HCT116 (cell line): ENCODE measurements at regions of chr13 and their contacts with region 1.

Region 1: DNA sequence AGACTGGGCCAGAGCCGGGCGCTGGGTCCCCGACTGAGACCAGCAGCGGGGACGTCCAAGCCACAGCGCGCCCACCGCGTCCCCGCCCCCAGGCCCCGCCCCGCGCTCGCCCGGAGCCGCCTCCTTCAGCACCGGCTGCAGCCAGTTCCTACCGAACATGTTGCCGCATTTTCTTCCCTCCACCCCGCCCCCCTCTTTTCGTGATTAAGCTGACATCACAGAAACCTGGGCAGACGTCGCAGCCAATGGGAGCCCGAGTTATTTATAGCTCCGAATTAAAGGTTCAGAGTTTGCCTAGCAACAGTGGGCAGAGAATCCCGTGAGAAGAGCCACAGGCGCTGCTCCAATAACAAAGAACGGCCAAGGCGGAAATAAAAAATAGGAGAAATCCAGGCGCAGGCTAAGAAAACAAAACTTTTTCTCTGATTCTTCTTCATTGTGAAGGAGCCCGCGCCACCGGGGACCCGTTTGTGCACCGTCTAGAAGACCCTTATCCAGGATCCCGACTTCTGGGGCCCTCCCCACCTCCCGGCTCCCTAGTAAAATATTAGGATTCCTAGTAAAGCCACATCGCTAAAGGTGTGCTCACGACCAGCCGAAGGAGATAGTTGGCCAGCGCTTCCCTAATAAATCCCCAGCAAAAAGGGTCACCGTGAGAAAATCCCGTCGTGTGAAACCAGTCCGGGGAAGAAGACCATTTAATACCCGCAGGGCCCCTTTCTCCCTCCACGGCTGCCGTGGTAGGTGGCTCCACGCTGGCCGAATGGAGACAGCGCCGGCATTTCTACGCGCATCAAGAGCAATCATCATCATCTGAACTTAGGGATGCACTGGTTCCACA is 61.7 kb downstream of the SERP2 start:
- DNase-seq: peak; percentile 92
- ATAC-seq: peak; percentile 59
- H3K4me3 ChIP-seq: peak overlapping the region; percentile 90 to 94
- H3K27ac ChIP-seq: peak overlapping the region; percentile 91
- H3K4me1 ChIP-seq: peaks cover 33 to 66% of the 10 kb centered on the region in 2 experiments
- H3K27me3 ChIP-seq: no peaks in the 10 kb centered on the region
- CTCF ChIP-seq: no peak
- POLR2A ChIP-seq: peak; percentile 15
- RAD21 ChIP-seq: no peak

Region 2: DNA sequence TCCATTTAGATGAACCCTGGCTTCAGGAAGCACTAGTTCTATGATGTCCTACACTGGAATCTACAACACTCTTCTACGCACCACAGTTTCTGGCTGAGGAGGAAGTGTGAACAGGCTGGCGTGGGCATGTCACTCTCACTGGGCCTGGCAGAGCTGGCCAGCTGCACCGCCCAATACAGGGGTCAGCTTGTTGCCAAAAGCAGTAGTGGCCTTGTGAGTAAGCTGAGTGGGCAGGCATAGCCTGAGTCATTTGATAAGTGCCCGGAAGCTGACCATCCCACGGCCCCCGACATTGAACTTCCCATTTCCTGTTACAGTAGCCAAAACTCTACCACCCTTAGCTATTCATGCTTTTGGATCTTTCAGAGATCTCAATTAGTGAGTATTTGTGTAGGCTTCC is 302.7 kb before region 1 on chr13:
- CTCF ChIA-PET with region 1: interaction called, 3 read pairs
- POLR2A ChIA-PET with region 1: interaction called, 17 read pairs
- RAD21 ChIA-PET with region 1: no interaction called
- intact Hi-C with region 1: no loop called
- DNase-seq: peak; percentile 38
- ATAC-seq: peak; percentile 60
- H3K4me3 ChIP-seq: no peak overlapping the region; a peak in 2 of 4 replicates
- H3K27ac ChIP-seq: no peak overlapping the region
- H3K4me1 ChIP-seq: peaks cover 5 to 29% of the 10 kb centered on the region in 2 experiments; a peak in 2 of 4 replicates
- H3K27me3 ChIP-seq: no peaks in the 10 kb centered on the region
- CTCF ChIP-seq: no peak
- POLR2A ChIP-seq: no peak
- RAD21 ChIP-seq: no peak

Region 3: DNA sequence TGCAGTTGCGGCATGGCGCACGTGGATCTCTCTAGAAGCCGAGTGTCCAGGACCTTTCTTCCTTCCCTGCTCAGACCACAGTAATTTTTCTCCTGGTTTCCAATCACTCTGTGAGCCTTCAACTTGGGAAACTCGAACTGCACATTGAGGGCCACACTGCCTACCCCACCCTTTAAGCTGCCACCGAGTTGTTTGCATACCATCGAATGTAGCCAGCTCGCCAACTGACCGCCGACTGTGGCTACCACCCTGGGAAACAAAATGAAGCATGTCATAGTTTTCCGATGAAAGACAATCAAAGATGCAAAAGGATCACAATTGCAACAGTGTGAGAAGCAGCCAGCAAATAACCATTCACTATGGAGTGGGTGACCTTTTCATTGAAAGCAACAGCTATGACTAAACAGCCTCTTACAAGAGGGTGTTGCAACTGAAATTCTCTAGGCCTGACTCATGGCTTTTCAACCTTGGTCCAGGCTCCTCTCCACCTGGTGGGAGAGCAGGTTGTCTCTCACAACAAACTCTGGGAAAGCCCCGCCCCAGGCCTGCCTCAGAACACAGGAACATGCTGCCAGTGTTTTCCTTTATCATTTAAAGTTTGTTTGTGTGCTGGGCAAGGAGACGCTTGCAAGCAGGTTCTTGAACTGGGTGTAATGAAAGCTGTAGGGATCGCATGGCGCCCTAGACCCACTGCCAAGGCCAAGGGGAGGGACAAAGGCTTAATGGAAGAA is 203.4 kb before region 1 on chr13:
- CTCF ChIA-PET with region 1: interaction called, 3 read pairs
- POLR2A ChIA-PET with region 1: interaction called, 39 read pairs
- RAD21 ChIA-PET with region 1: no interaction called
- intact Hi-C with region 1: no loop called
- DNase-seq: peak; percentile 97
- ATAC-seq: peak; percentile 96
- H3K4me3 ChIP-seq: peak overlapping the region in 1 of 2 experiments; percentile 39; a peak in 1 of 4 replicates
- H3K27ac ChIP-seq: peak overlapping the region; percentile 90
- H3K4me1 ChIP-seq: peaks cover 23 to 48% of the 10 kb centered on the region in 2 experiments
- H3K27me3 ChIP-seq: no peaks in the 10 kb centered on the region
- CTCF ChIP-seq: 0 out of 6 replicates have a peak, but pooled peaks of 1 of the 3 experiments have one; percentile 10
- POLR2A ChIP-seq: no peak
- RAD21 ChIP-seq: peak; percentile 50

Region 4: DNA sequence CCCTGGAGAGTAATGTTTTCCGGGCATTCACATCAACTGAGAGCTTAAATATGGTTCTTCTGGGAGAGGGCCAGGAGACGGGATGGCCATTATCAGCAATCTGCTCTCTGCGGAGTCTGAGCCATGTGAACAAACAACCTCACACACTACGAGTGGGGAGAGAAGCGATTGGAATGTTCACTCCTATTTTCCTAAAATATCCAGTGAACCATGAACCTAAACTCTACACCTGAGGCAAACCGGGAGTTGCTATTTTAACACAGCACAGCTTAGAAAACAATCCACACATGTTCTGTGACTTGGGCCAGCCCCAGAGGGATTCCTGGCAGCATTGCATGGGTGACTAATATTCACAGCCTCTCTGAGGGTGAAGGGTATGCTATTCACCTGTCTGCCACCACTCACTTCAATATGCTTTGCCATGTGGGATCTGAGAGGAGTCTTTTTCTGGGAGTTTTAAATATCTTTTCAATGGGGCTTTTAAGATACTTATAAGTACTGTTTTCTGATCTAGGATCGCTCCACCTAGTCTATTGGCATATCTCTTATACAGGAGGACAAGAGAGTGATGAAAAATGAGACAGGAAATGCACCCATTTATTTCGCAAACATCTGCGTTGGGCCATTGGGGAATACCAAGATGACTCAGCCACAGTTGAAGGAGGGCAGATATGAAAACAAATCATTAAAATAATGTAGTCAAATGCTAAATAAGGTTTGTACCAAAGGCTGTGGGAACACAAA is 134.3 kb before region 1 on chr13:
- CTCF ChIA-PET with region 1: interaction called, 3 read pairs
- POLR2A ChIA-PET with region 1: interaction called, 172 read pairs
- RAD21 ChIA-PET with region 1: interaction called in 1 of 2 experiments, 6 read pairs
- intact Hi-C with region 1: loop called (anchors 1 kb)
- DNase-seq: peak; percentile 36
- ATAC-seq: peak; percentile 77
- H3K4me3 ChIP-seq: no peak overlapping the region
- H3K27ac ChIP-seq: peak overlapping the region; percentile 49
- H3K4me1 ChIP-seq: peaks cover 40 to 81% of the 10 kb centered on the region in 2 experiments
- H3K27me3 ChIP-seq: no peaks in the 10 kb centered on the region
- CTCF ChIP-seq: no peak
- POLR2A ChIP-seq: no peak
- RAD21 ChIP-seq: no peak

Region 5: DNA sequence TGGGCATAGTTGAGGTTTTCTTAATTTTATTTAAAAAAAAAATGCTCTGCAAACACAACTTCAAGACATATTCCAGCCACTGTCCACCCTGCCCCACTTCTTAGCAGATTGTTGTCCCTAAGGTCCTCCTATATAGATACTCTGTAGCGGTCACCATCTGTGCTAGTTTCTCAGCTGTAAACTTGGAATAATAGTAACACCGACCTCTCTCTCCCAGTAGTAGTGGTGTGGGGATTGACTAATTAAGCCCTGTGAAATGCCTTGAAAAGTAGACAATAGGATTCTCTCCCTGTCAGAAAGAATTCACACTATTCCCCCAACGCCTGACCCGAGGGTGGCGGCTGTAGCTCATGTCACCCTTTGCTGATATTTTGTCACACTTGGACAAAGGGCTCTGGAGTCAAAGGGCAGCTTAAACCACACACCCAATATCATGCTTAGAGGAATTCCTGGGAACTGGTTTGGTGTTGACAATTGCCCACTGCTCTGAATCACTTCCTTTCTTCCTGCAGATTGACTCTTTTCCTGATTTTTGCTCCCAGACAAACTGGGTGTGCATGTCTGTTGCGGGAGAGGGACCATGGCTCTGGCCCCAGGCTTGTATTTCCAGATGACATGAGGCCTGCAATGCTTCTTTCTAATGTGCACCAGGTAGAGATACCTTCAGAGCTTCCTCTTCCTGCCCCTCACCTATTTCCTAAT is 70.9 kb before region 1 on chr13:
- CTCF ChIA-PET with region 1: interaction called, 3 read pairs
- POLR2A ChIA-PET with region 1: interaction called, 11 read pairs
- RAD21 ChIA-PET with region 1: no interaction called
- intact Hi-C with region 1: loop called (anchors 2 kb)
- DNase-seq: peak; percentile 71
- ATAC-seq: peak; percentile 79
- H3K4me3 ChIP-seq: peak overlapping the region in 1 of 2 experiments; percentile 11; a peak in 2 of 4 replicates
- H3K27ac ChIP-seq: peak overlapping the region; percentile 28; the same call in 1 of the 2 replicates
- H3K4me1 ChIP-seq: peaks cover 19 to 75% of the 10 kb centered on the region in 2 experiments; a peak in 3 of 4 replicates
- H3K27me3 ChIP-seq: no peaks in the 10 kb centered on the region
- CTCF ChIP-seq: no peak
- POLR2A ChIP-seq: no peak
- RAD21 ChIP-seq: no peak

Region 6: DNA sequence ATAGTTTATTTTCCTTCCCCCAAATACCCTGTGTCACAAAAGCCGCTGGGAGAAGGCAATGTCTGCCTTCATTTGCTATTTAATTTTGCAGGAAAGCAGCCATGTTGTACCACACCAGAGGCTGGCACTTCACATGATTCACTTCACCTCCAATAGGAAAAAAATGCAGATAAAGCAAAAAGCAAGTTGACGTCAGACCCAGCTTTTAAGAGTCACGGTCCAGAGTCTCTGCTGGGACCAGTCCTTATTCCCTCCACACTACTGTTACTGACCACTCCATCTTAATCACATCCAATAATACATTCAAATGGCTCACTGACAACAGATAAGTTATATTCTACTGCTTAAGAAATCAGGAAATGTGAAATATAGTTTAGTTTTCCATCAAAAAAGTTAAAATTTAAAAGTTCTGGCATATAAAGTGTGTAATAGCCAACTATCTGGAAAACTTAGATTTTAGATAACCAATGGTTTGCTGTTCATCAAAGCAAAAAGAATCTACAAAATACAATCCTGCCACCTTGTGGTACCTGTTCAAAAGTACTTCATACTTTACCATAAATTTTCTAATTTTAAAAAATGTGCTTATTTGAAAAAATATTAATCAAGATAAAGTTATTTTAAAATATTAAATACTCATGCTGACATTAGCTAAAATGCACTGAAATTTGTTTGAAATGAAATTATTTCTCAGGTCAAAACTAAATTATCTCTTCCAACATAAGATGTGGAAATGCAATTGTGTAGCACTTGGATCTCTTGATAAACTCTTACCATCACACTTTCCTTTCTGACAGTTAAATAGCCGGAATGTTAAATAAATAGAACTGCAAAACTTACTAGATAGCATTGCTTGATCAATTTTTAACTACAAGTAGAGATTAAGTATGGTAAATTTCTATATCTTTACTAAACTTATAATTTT is 35.5 kb after region 1 on chr13:
- CTCF ChIA-PET with region 1: interaction called, 7 read pairs
- POLR2A ChIA-PET with region 1: interaction called, 28 read pairs
- RAD21 ChIA-PET with region 1: interaction called in 1 of 2 experiments, 4 read pairs
- intact Hi-C with region 1: loop called (anchors 5 kb)
- DNase-seq: peak; percentile 35
- ATAC-seq: no peak
- H3K4me3 ChIP-seq: no peak overlapping the region
- H3K27ac ChIP-seq: no peak overlapping the region
- H3K4me1 ChIP-seq: peaks cover 13 to 30% of the 10 kb centered on the region in 2 experiments
- H3K27me3 ChIP-seq: no peaks in the 10 kb centered on the region
- CTCF ChIP-seq: peak; percentile 35 to 63 (median 50); a peak in 4 of 6 replicates
- POLR2A ChIP-seq: no peak
- RAD21 ChIP-seq: peak; percentile 78